HepG2 (cell line): ENCODE measurements at regions of chr5 and their contacts with region 1.

Region 1: GRCh38 chr5:140868721-140869554 is at the start of gene PCDHA11:
- DNase-seq: peak; percentile 45
- ATAC-seq: peak; percentile 97
- H3K4me3 ChIP-seq: peak within 1 kb of the TSS in 2 of 3 experiments; percentile 10 to 28; a peak in 1 of 6 replicates
- H3K27ac ChIP-seq: no peak within 1 kb of the TSS
- H3K4me1 ChIP-seq: no peaks in the 10 kb centered on the region
- H3K27me3 ChIP-seq: no peaks in the 10 kb centered on the region
- CTCF ChIP-seq: peak; percentile 73
- EP300 ChIP-seq: no peak
- POLR2A ChIP-seq: no peak
- RAD21 ChIP-seq: no peak
- total RNA-seq, gene PCDHA11: 0.07 and 0.29 TPM in 2 replicates

Region 2: DNA sequence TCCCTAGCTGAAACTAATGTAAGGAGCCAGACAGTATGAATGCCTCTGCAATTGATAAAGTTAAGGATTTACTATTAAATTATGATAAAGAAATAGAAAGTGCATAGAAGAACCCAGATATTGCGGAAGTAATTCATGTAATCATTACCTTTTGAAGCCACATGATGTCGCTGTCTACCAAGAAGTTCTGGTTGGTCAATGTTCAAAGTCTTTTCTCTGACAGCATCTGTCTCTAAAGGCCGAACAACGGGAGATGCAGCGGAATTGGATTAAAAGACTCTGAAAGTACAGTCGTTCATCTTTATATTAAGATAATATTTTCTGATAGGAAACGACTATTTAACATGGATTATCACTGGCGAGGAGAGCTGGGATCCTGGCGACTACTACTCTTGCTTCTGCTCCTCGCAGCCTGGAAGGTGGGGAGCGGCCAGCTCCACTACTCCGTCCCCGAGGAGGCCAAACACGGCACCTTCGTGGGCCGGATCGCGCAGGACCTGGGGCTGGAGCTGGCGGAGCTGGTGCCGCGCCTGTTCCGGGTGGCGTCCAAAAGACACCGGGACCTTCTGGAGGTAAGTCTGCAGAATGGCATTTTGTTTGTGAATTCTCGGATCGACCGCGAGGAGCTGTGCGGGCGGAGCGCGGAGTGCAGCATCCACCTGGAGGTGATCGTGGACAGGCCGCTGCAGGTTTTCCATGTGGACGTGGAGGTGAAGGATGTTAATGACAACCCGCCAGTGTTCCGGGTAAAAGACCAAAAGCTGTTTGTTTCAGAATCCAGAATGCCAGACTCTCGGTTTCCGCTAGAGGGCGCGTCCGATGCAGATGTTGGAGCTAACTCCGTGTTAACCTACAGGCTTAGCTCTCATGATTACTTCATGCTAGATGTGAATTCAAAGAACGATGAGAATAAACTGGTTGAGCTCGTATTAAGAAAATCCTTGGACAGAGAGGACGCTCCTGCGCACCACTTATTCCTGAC is 27.7 kb before region 1 on chr5 and contains the start of gene PCDHA8:
- CTCF ChIA-PET with region 1: no interaction called
- POLR2A ChIA-PET with region 1: no interaction called
- in situ Hi-C with region 1: no loop called
- intact Hi-C with region 1: loop called (anchors 2 kb)
- DNase-seq: peak; percentile 48
- ATAC-seq: peak; percentile 89
- H3K4me3 ChIP-seq: peak within 1 kb of the TSS in 2 of 3 experiments; percentile 28 to 49; a peak in 3 of 6 replicates
- H3K27ac ChIP-seq: no peak within 1 kb of the TSS
- H3K4me1 ChIP-seq: no peaks in the 10 kb centered on the region
- H3K27me3 ChIP-seq: no peaks in the 10 kb centered on the region
- CTCF ChIP-seq: peak; percentile 65
- EP300 ChIP-seq: no peak
- POLR2A ChIP-seq: no peak
- RAD21 ChIP-seq: no peak; the same call in 1 of the 2 replicates
- total RNA-seq, gene PCDHA8: 0.07 and 0.11 TPM in 2 replicates